ENCODE measurements at regions of chr5 and their contacts with region 1.

Region 1: GRCh38 chr5:177113566-177114424 is 19.8 kb upstream of the NSD1 start:
- DNase-seq: peak; percentile 55
- ATAC-seq: peak; percentile 81
- H3K4me3 ChIP-seq: no peak overlapping the region
- H3K27ac ChIP-seq: no peak overlapping the region
- H3K4me1 ChIP-seq: peaks cover 3% of the 10 kb centered on the region; the same call in 1 of the 2 replicates
- H3K27me3 ChIP-seq: no peaks in the 10 kb centered on the region
- CTCF ChIP-seq: peak; percentile 99 to 100 (median 99); a peak in 5 of 6 replicates
- EP300 ChIP-seq: no peak
- POLR2A ChIP-seq: no peak
- RAD21 ChIP-seq: peak; percentile 100

Region 2: GRCh38 chr5:176653401-176654385 is 460.1 kb before region 1 on chr5:
- CTCF ChIA-PET with region 1: interaction called, 102 read pairs
- POLR2A ChIA-PET with region 1: no interaction called
- RAD21 ChIA-PET with region 1: interaction called, 43 read pairs
- SMC1A ChIA-PET with region 1: interaction called, 8 read pairs
- in situ Hi-C with region 1: loop called (anchors 5 kb)
- intact Hi-C with region 1: no loop called
- DNase-seq: peak; percentile 12
- ATAC-seq: peak; percentile 54
- H3K4me3 ChIP-seq: no peak overlapping the region
- H3K27ac ChIP-seq: no peak overlapping the region
- H3K4me1 ChIP-seq: peaks cover 30% of the 10 kb centered on the region
- H3K27me3 ChIP-seq: no peaks in the 10 kb centered on the region
- CTCF ChIP-seq: no peak
- EP300 ChIP-seq: peak in 1 of 2 experiments; percentile 57; a peak in 1 of 4 replicates
- POLR2A ChIP-seq: no peak
- RAD21 ChIP-seq: no peak

Region 3: GRCh38 chr5:177071666-177072385 is 42.0 kb before region 1 on chr5:
- CTCF ChIA-PET with region 1: interaction called, 159 read pairs
- POLR2A ChIA-PET with region 1: interaction called, 3 read pairs
- RAD21 ChIA-PET with region 1: interaction called, 77 read pairs
- SMC1A ChIA-PET with region 1: interaction called, 70 read pairs
- in situ Hi-C with region 1: no loop called
- intact Hi-C with region 1: loop called (anchors 1 kb)
- DNase-seq: peak; percentile 56
- ATAC-seq: peak; percentile 98
- H3K4me3 ChIP-seq: no peak overlapping the region
- H3K27ac ChIP-seq: no peak overlapping the region
- H3K4me1 ChIP-seq: peaks cover 10% of the 10 kb centered on the region
- H3K27me3 ChIP-seq: no peaks in the 10 kb centered on the region
- CTCF ChIP-seq: peak; percentile 87 to 90 (median 90)
- EP300 ChIP-seq: no peak
- POLR2A ChIP-seq: no peak
- RAD21 ChIP-seq: peak; percentile 63

Region 4: DNA sequence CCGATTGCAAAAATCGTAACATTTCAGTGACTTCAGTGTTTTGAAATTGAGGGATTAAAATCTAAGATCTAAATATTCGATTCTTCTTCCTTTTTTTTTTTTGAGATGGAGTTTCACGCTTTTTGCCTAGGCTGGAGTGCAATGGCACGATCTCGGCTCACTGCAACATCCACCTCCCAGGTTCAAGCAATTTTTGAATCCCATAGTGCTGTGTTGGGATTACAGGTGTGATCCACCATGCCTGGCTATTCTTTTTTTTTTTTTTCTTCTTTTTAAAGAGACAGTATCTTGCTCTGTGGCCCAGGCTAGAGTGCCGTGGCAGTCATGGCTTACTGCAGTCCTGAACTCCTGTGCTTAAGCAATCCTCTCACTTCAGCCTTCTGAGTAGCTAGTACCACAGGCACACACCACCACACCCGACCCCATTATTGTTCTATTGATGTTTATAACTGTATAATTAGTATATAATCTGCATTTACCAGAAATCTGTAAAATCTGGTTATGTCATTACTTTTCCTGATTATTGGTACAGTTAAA is 62.4 kb after region 1 on chr5:
- CTCF ChIA-PET with region 1: interaction called, 21 read pairs
- POLR2A ChIA-PET with region 1: interaction called, 4 read pairs
- RAD21 ChIA-PET with region 1: interaction called, 4 read pairs
- SMC1A ChIA-PET with region 1: interaction called, 4 read pairs
- in situ Hi-C with region 1: no loop called
- intact Hi-C with region 1: no loop called
- DNase-seq: no peak
- ATAC-seq: peak; percentile 61
- H3K4me3 ChIP-seq: no peak overlapping the region
- H3K27ac ChIP-seq: peak overlapping the region; percentile 52
- H3K4me1 ChIP-seq: peaks cover 31% of the 10 kb centered on the region
- H3K27me3 ChIP-seq: no peaks in the 10 kb centered on the region
- CTCF ChIP-seq: no peak
- EP300 ChIP-seq: no peak
- POLR2A ChIP-seq: no peak
- RAD21 ChIP-seq: no peak

Region 5: GRCh38 chr5:177264178-177264577 is 150.4 kb after region 1 on chr5:
- CTCF ChIA-PET with region 1: interaction called, 8 read pairs
- POLR2A ChIA-PET with region 1: no interaction called
- RAD21 ChIA-PET with region 1: interaction called, 4 read pairs
- SMC1A ChIA-PET with region 1: interaction called, 3 read pairs
- in situ Hi-C with region 1: no loop called
- intact Hi-C with region 1: loop called (anchors 5 kb)
- DNase-seq: no peak
- ATAC-seq: no peak
- H3K4me3 ChIP-seq: no peak overlapping the region
- H3K27ac ChIP-seq: no peak overlapping the region
- H3K4me1 ChIP-seq: no peaks in the 10 kb centered on the region
- H3K27me3 ChIP-seq: no peaks in the 10 kb centered on the region
- CTCF ChIP-seq: no peak
- EP300 ChIP-seq: no peak
- POLR2A ChIP-seq: no peak
- RAD21 ChIP-seq: no peak

Region 6: GRCh38 chr5:177303121-177303924 is 189.5 kb after region 1 on chr5 and contains the starts of genes PRELID1 and RAB24:
- CTCF ChIA-PET with region 1: interaction called, 56 read pairs
- POLR2A ChIA-PET with region 1: interaction called, 4 read pairs
- RAD21 ChIA-PET with region 1: interaction called, 12 read pairs
- SMC1A ChIA-PET with region 1: interaction called, 19 read pairs
- in situ Hi-C with region 1: loop called (anchors 5 kb)
- intact Hi-C with region 1: loop called (anchors 5 kb)
- DNase-seq: no peak
- ATAC-seq: peak; percentile 71
- H3K4me3 ChIP-seq: peak within 1 kb of the TSS; percentile 75
- H3K27ac ChIP-seq: peak within 1 kb of the TSS; percentile 90
- H3K4me1 ChIP-seq: peaks cover 42% of the 10 kb centered on the region
- H3K27me3 ChIP-seq: no peaks in the 10 kb centered on the region
- CTCF ChIP-seq: peak; percentile 23 to 52 (median 34); a peak in 4 of 6 replicates
- EP300 ChIP-seq: no peak
- POLR2A ChIP-seq: peak; percentile 54
- RAD21 ChIP-seq: no peak
- polyA plus RNA-seq, gene PRELID1: 30.9 to 106 TPM
- polyA plus RNA-seq, gene RAB24: 8.0 to 12.8 TPM

Region 7: GRCh38 chr5:177354711-177355110 is 240.9 kb after region 1 on chr5:
- CTCF ChIA-PET with region 1: no interaction called
- POLR2A ChIA-PET with region 1: no interaction called
- RAD21 ChIA-PET with region 1: no interaction called
- SMC1A ChIA-PET with region 1: no interaction called
- in situ Hi-C with region 1: no loop called
- intact Hi-C with region 1: no loop called
- DNase-seq: no peak
- ATAC-seq: no peak
- H3K4me3 ChIP-seq: no peak overlapping the region
- H3K27ac ChIP-seq: no peak overlapping the region
- H3K4me1 ChIP-seq: peaks cover 36% of the 10 kb centered on the region
- H3K27me3 ChIP-seq: no peaks in the 10 kb centered on the region
- CTCF ChIP-seq: no peak
- EP300 ChIP-seq: no peak
- POLR2A ChIP-seq: no peak
- RAD21 ChIP-seq: no peak

Region 8: GRCh38 chr5:177390363-177391300 is 276.8 kb after region 1 on chr5:
- CTCF ChIA-PET with region 1: interaction called, 31 read pairs
- POLR2A ChIA-PET with region 1: no interaction called
- RAD21 ChIA-PET with region 1: interaction called, 11 read pairs
- SMC1A ChIA-PET with region 1: interaction called, 5 read pairs
- in situ Hi-C with region 1: no loop called
- intact Hi-C with region 1: no loop called
- DNase-seq: peak; percentile 74
- ATAC-seq: peak; percentile 89
- H3K4me3 ChIP-seq: no peak overlapping the region
- H3K27ac ChIP-seq: peak overlapping the region; percentile 67
- H3K4me1 ChIP-seq: peaks cover 26% of the 10 kb centered on the region
- H3K27me3 ChIP-seq: no peaks in the 10 kb centered on the region
- CTCF ChIP-seq: peak; percentile 91 to 97 (median 94)
- EP300 ChIP-seq: no peak; a peak in 1 of 4 replicates
- POLR2A ChIP-seq: no peak
- RAD21 ChIP-seq: peak; percentile 86

Measured in GM12878 (cell line).